A673 (cell line): ENCODE measurements at regions of chr5 and their contacts with region 1.

Region 1: DNA sequence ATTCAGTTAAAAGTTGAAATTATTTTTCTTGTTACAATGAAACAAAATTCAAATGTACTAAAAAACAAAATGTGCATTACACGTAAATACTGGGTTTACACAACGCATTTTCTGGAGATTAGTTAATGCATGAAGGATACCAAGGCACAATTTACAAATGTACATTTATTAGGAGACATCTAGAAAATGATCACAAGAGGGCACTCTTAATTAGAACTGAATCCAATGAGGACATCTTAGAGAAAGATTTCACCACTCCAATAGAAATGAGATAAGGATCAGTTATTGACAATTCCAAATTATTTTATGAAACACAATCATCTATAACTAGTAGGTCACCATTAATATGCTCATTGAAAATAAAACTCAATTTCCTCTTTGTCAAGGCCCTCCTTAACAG is 36.6 kb upstream of the CDH12 start:
- DNase-seq: peak; percentile 14
- H3K4me3 ChIP-seq: no peak overlapping the region
- H3K27ac ChIP-seq: no peak overlapping the region
- H3K4me1 ChIP-seq: no peaks in the 10 kb centered on the region
- H3K27me3 ChIP-seq: no peaks in the 10 kb centered on the region
- CTCF ChIP-seq: peak; percentile 56

Region 2: DNA sequence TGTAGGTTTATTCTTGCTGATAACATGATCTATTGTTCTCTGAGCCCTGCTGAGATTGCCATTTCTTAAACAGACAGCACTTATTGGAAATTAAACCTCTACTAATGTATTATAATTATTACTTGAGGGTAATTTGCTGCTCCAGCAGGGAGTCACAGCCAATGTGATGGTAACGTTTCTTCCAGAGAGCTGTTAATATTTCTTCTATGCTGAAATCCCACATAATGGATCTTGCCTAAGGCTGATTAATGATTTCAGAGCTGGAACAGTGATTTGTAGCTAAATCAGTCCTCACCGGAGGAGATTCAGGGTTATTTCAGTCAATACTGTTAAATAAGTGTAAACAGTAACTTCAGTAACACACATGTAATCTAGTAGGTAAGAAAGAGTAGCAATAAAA is 206.7 kb before region 1 on chr5:
- CTCF ChIA-PET with region 1: no interaction called
- POLR2A ChIA-PET with region 1: no interaction called
- intact Hi-C with region 1: no loop called
- DNase-seq: no peak
- H3K4me3 ChIP-seq: no peak overlapping the region
- H3K27ac ChIP-seq: no peak overlapping the region
- H3K4me1 ChIP-seq: peaks cover 2% of the 10 kb centered on the region
- H3K27me3 ChIP-seq: no peaks in the 10 kb centered on the region
- CTCF ChIP-seq: no peak

Region 3: GRCh38 chr5:23139338-23140171 is 249.8 kb after region 1 on chr5:
- CTCF ChIA-PET with region 1: no interaction called
- POLR2A ChIA-PET with region 1: no interaction called
- intact Hi-C with region 1: loop called (anchors 10 kb)
- DNase-seq: peak; percentile 33
- H3K4me3 ChIP-seq: no peak overlapping the region
- H3K27ac ChIP-seq: no peak overlapping the region
- H3K4me1 ChIP-seq: no peaks in the 10 kb centered on the region
- H3K27me3 ChIP-seq: no peaks in the 10 kb centered on the region
- CTCF ChIP-seq: peak; percentile 63

Region 4: DNA sequence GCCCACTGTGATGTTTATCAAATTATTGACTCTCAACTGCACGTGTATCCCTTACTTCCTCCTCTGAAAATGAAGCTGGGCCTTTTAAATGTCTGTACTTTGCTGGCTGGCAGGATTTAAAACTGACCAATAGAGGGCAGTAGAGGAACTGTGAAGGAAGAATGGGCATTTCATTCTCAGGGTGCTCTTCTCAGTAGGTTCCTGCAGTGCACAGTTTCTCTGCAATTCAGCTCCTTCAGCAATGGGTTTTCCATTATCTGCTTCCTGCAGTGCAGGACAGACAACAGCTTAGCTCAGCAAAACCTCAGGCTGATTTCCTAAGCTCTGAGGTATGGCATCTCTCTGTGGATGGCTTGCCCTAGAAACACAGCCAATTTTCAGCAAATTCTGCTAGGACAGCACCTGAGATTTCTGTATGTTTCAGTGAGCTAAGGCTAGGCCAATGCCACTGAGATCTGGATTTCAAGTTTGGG is 319.3 kb after region 1 on chr5:
- CTCF ChIA-PET with region 1: no interaction called
- POLR2A ChIA-PET with region 1: no interaction called
- intact Hi-C with region 1: loop called (anchors 5 kb)
- DNase-seq: peak; percentile 81
- H3K4me3 ChIP-seq: no peak overlapping the region
- H3K27ac ChIP-seq: no peak overlapping the region
- H3K4me1 ChIP-seq: no peaks in the 10 kb centered on the region
- H3K27me3 ChIP-seq: no peaks in the 10 kb centered on the region
- CTCF ChIP-seq: peak; percentile 84

Region 5: DNA sequence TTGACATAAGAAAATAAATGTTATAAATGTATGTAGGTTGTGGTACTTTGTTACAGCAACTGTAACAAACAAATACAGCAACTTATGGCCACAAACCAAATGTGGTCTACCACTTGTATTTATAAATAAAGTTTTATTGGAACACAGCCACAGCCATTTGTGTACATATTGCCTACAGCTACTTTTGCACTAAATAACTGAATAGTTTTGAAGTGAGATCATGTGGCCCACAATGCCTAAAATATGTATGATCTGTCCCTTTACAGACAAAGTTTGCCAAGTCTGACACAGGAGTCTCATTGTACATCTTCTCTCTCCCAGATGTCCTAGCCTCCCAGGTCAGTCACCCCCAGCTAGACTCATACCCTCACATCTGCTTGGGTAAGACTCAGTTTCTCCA is 334.1 kb after region 1 on chr5:
- CTCF ChIA-PET with region 1: no interaction called
- POLR2A ChIA-PET with region 1: no interaction called
- intact Hi-C with region 1: no loop called
- DNase-seq: no peak
- H3K4me3 ChIP-seq: no peak overlapping the region
- H3K27ac ChIP-seq: no peak overlapping the region
- H3K4me1 ChIP-seq: no peaks in the 10 kb centered on the region
- H3K27me3 ChIP-seq: no peaks in the 10 kb centered on the region
- CTCF ChIP-seq: no peak

Region 6: DNA sequence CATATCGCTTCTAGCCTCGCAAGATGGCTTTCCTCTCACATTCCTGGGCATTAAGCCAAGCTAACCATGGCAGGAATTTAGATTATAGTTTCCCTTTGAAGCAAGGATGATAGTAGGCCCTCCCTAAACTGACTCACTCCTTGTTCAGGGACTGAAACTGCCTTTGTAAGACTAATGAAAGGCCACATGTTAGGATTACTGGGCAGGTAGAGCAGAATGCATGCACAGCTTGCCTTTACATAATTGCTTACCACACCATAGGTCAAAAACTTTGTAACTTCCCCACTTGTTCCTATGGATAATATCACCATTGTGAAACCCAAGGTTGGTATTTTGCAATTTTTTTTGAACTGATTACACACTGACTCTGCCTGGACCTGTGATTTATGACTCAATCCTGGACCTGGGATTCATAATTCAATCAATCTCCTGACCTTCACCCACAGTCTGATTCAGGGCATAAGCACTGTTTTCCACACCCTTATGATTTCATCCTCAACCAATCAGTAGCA is 576.7 kb after region 1 on chr5:
- CTCF ChIA-PET with region 1: no interaction called
- POLR2A ChIA-PET with region 1: no interaction called
- intact Hi-C with region 1: no loop called
- DNase-seq: peak; percentile 57
- H3K4me3 ChIP-seq: no peak overlapping the region
- H3K27ac ChIP-seq: no peak overlapping the region
- H3K4me1 ChIP-seq: no peaks in the 10 kb centered on the region
- H3K27me3 ChIP-seq: no peaks in the 10 kb centered on the region
- CTCF ChIP-seq: no peak